Esophagus muscularis mucosa (tissue), 4 donors: ENCODE measurements at regions of chr9 and their contacts with region 1.

Region 1: GRCh38 chr9:121861501-121862180 is 210.2 kb downstream of the DAB2IP start:
- DNase-seq: no peak
- H3K4me3 ChIP-seq: no peak overlapping the region
- H3K27ac ChIP-seq: no peak overlapping the region
- H3K4me1 ChIP-seq: peaks cover 0 to 13% (median 10%) of the 10 kb centered on the region in 4 donors
- H3K27me3 ChIP-seq: no peaks in the 10 kb centered on the region
- CTCF ChIP-seq: peak in 2 of 3 experiments; percentile 24 to 47
- EP300 ChIP-seq: no peak
- POLR2A ChIP-seq: no peak

Region 2: GRCh38 chr9:121686930-121687541 is 174.6 kb before region 1 on chr9:
- intact Hi-C with region 1: loop called (anchors 5 kb)
- DNase-seq: no peak
- H3K4me3 ChIP-seq: no peak overlapping the region
- H3K27ac ChIP-seq: peak overlapping the region in 1 of 4 donors; percentile 47
- H3K4me1 ChIP-seq: peaks cover 26 to 53% (median 36%) of the 10 kb centered on the region in 4 donors
- H3K27me3 ChIP-seq: no peaks in the 10 kb centered on the region
- CTCF ChIP-seq: peak; percentile 75 to 90 (median 80)
- EP300 ChIP-seq: no peak
- POLR2A ChIP-seq: no peak